CD4-positive, alpha-beta T cell (primary cell): ENCODE measurements at regions of chr4 and their contacts with region 1.

Region 1: GRCh38 chr4:108030332-108030731 is 40.6 kb downstream of the HADH start:
- DNase-seq: peak; percentile 52 to 88 (median 70)
- ATAC-seq: peak; percentile 87
- H3K4me3 ChIP-seq: no peak overlapping the region
- H3K4me3 Mint-ChIP-seq: peak overlapping the region; percentile 64
- H3K27ac ChIP-seq: peak overlapping the region in 1 of 2 donors; percentile 42
- H3K27ac Mint-ChIP-seq: peak overlapping the region; percentile 81
- H3K4me1 ChIP-seq: peaks cover 37% of the 10 kb centered on the region
- H3K4me1 Mint-ChIP-seq: peaks cover 67% of the 10 kb centered on the region
- H3K27me3 ChIP-seq: no peaks in the 10 kb centered on the region
- H3K27me3 Mint-ChIP-seq: no peaks in the 10 kb centered on the region
- CTCF ChIP-seq: peak; percentile 69

Region 2: GRCh38 chr4:108045694-108046038 is 15.3 kb after region 1 on chr4:
- CTCF ChIA-PET with region 1: interaction called, 16 read pairs
- POLR2A ChIA-PET with region 1: interaction called, 21 read pairs
- intact Hi-C with region 1: loop called in 1 of 2 experiments (anchors 1 kb)
- DNase-seq: peak in 2 of 14 experiments; percentile 40 to 41
- ATAC-seq: peak; percentile 21
- H3K4me3 ChIP-seq: no peak overlapping the region
- H3K4me3 Mint-ChIP-seq: no peak overlapping the region
- H3K27ac ChIP-seq: peak overlapping the region; percentile 14 to 49
- H3K27ac Mint-ChIP-seq: peak overlapping the region; percentile 93
- H3K4me1 ChIP-seq: peaks cover 31% of the 10 kb centered on the region
- H3K4me1 Mint-ChIP-seq: peaks cover 69% of the 10 kb centered on the region
- H3K27me3 ChIP-seq: no peaks in the 10 kb centered on the region
- H3K27me3 Mint-ChIP-seq: no peaks in the 10 kb centered on the region
- CTCF ChIP-seq: no peak

Region 3: DNA sequence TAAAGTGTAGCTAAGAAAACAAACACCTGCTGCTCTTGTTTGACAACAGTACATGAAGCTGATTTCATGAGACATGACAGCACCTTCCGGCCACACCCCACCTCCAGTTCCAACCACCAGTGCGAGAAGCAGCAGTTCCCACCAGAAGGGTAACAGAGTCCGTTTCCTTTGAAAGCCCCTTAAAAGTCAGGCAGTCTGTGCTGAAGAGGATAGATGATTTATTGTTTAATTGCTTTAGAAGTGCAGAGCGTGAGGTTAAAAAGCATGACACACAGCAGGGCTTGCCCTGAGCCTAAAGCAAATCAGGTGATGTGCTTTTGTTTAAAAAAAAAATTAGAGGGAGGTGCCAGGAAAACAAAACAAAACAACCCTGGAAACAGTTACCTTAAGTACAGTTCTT is 42.0 kb after region 1 on chr4:
- CTCF ChIA-PET with region 1: interaction called, 9 read pairs
- POLR2A ChIA-PET with region 1: interaction called, 11 read pairs
- intact Hi-C with region 1: loop called in 1 of 2 experiments (anchors 2 kb)
- DNase-seq: peak; percentile 50 to 86 (median 70)
- ATAC-seq: peak; percentile 83
- H3K4me3 ChIP-seq: no peak overlapping the region
- H3K4me3 Mint-ChIP-seq: peak overlapping the region; percentile 44
- H3K27ac ChIP-seq: peak overlapping the region; percentile 49 to 86
- H3K27ac Mint-ChIP-seq: peak overlapping the region; percentile 88
- H3K4me1 ChIP-seq: peaks cover 28% of the 10 kb centered on the region
- H3K4me1 Mint-ChIP-seq: peaks cover 81% of the 10 kb centered on the region
- H3K27me3 ChIP-seq: no peaks in the 10 kb centered on the region
- H3K27me3 Mint-ChIP-seq: no peaks in the 10 kb centered on the region
- CTCF ChIP-seq: no peak

Region 4: DNA sequence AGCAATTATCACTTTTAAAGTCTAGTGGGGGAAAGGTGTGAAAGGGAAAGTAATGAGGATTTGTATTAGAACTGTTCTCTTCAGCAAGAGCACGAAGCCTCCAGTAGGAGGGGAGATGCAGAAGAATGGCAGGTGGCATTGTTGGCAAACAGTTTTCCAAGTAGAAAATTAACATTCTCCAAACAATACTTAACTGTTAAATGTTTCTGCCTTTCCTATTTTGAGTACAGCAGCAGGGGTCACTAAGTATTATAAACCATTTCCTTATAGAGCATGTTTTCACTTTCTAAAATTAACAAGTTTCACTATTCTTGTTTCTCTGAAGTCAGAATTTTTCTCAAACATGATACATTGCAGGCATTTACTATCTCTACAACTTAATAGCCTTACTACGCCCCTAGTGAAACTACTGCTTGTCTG is 79.7 kb after region 1 on chr4:
- CTCF ChIA-PET with region 1: interaction called, 11 read pairs
- POLR2A ChIA-PET with region 1: interaction called, 16 read pairs
- intact Hi-C with region 1: no loop called
- DNase-seq: peak in 1 of 14 experiments; percentile 10
- ATAC-seq: no peak
- H3K4me3 ChIP-seq: peak overlapping the region; percentile 2
- H3K4me3 Mint-ChIP-seq: peak overlapping the region; percentile 73
- H3K27ac ChIP-seq: peak overlapping the region; percentile 48 to 89
- H3K27ac Mint-ChIP-seq: peak overlapping the region; percentile 92
- H3K4me1 ChIP-seq: peaks cover 85% of the 10 kb centered on the region
- H3K4me1 Mint-ChIP-seq: peaks cover 95% of the 10 kb centered on the region
- H3K27me3 ChIP-seq: no peaks in the 10 kb centered on the region
- H3K27me3 Mint-ChIP-seq: no peaks in the 10 kb centered on the region
- CTCF ChIP-seq: no peak

Region 5: DNA sequence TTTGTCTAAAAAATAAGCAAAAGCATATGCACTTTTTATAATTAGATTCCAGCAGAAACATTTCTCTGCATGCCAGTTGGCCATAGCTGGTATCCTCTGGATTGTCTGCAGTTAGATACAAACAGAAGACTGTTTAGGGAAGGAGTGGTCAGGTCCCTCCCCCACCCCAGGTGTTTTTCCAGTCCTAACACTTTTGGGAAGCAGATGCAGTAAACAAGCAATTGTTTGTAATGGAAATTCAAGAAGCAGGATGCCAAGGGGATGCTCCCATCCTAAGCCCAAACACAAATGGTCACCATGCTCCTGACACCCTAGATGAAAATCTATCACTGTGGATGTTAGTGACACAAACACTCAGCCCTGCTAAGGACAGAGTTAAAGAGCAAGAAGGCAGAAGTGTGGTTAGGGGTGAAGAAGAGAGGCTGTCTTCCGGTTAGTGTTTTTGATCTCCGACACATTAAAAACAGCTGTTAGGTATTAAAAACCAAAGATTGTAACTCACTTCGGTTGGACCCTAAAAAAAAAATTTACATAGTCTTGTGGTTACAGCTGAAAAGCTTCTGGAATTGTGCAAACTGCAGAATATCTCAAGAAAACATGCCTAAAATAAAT is 130.5 kb after region 1 on chr4:
- CTCF ChIA-PET with region 1: interaction called, 8 read pairs
- POLR2A ChIA-PET with region 1: interaction called, 15 read pairs
- intact Hi-C with region 1: loop called in 1 of 2 experiments (anchors 5 kb)
- DNase-seq: peak in 3 of 14 experiments; percentile 54 to 60 (median 59)
- ATAC-seq: peak; percentile 45
- H3K4me3 ChIP-seq: peak overlapping the region; percentile 76
- H3K4me3 Mint-ChIP-seq: peak overlapping the region; percentile 87
- H3K27ac ChIP-seq: peak overlapping the region; percentile 7 to 36
- H3K27ac Mint-ChIP-seq: peak overlapping the region; percentile 79
- H3K4me1 ChIP-seq: peaks cover 22% of the 10 kb centered on the region
- H3K4me1 Mint-ChIP-seq: peaks cover 71% of the 10 kb centered on the region
- H3K27me3 ChIP-seq: no peaks in the 10 kb centered on the region
- H3K27me3 Mint-ChIP-seq: no peaks in the 10 kb centered on the region
- CTCF ChIP-seq: no peak

Region 6: DNA sequence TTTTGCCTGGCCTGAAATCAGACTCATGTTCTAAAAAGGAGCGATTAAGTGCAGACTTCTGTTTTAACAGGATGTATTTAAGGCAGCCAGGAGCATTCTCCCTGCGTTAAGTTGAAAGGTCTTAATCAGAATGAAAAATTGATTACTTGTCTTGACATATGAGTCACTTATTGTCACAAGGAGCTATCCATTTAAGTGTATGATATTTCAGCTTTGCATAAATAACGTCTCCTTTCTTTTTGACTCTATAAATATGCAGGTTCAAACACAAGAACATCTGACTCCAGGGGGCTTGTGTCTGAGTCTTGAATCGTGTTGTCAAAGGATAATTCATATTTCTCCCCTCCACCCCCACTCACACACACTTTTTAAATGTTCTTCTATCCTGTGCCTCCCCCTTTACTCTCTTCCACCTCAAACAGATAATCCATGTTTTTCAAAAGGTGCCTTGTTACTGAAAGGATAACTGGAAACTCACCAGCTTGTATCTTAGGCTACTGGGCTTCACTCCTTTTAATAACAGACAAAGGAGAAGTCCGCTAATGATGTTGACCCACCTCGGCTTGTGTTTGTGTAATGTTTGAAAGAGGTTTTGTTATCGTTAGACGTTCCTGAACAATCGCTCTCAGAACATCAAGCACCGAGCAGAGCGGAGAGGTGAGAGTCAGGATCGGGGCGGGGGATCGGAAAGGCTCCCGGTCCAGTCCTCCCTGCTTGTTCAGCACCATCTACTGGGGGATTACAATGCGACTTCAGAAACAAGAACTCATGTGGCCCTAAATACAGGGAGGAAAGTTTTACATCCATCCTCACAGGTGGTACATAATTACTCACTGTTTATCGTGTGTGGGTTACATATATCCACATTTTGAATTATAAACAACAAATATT is 482.5 kb after region 1 on chr4:
- CTCF ChIA-PET with region 1: no interaction called
- POLR2A ChIA-PET with region 1: no interaction called
- intact Hi-C with region 1: loop called (anchors 1 to 5 kb)
- DNase-seq: peak; percentile 11 to 76 (median 42)
- ATAC-seq: peak; percentile 95
- H3K4me3 ChIP-seq: no peak overlapping the region
- H3K4me3 Mint-ChIP-seq: peak overlapping the region; percentile 78
- H3K27ac ChIP-seq: no peak overlapping the region
- H3K27ac Mint-ChIP-seq: no peak overlapping the region
- H3K4me1 ChIP-seq: peaks cover 3% of the 10 kb centered on the region
- H3K4me1 Mint-ChIP-seq: peaks cover 21% of the 10 kb centered on the region
- H3K27me3 ChIP-seq: no peaks in the 10 kb centered on the region
- H3K27me3 Mint-ChIP-seq: no peaks in the 10 kb centered on the region
- CTCF ChIP-seq: peak; percentile 29

Region 7: DNA sequence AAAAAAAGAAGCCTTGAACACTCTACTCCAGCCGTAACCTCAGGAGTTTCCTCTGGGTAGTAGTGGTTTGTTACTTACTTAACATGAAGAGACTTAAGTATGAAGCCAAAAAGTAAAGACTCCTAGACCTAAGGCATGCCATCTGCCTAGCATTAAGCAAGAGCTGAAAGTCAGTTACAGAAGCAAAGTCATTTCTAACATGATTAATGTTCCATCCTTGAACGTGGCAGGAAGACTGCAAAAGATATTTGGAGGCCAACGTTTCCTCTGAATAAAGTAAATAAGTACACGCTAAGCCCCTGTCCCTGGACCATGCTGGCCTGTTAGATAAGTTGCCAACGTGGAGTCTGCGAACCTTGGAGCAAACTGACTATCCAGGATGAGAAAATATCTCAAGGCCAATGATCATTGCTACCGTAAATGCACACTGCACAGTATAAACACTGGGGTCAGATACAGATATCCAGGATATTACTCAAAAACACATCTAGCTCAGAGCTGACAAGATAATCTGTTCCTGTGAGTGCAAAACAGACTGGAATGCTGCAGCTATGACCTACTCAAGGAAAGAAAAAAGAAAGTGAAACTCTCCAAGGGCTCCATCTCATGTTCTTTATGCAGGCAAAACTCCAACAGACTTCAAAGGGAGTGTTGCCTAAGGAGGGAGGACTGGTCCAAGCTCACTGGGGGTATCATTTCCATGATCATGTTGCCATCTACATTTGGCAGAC is 1016.3 kb after region 1 on chr4:
- CTCF ChIA-PET with region 1: no interaction called
- POLR2A ChIA-PET with region 1: no interaction called
- intact Hi-C with region 1: no loop called
- DNase-seq: no peak
- ATAC-seq: no peak
- H3K4me3 ChIP-seq: no peak overlapping the region
- H3K4me3 Mint-ChIP-seq: no peak overlapping the region
- H3K27ac ChIP-seq: no peak overlapping the region
- H3K27ac Mint-ChIP-seq: no peak overlapping the region
- H3K4me1 ChIP-seq: no peaks in the 10 kb centered on the region
- H3K4me1 Mint-ChIP-seq: peaks cover 5% of the 10 kb centered on the region
- H3K27me3 ChIP-seq: no peaks in the 10 kb centered on the region
- H3K27me3 Mint-ChIP-seq: peaks cover under 1% of the 10 kb centered on the region
- CTCF ChIP-seq: no peak